Panc1 (cell line): ENCODE measurements at regions of chr5 and their contacts with region 1.

Region 1: GRCh38 chr5:92017786-92018185 is 634.7 kb upstream of the ARRDC3 start:
- DNase-seq: peak; percentile 33
- ATAC-seq: peak; percentile 98
- H3K4me3 ChIP-seq: no peak overlapping the region
- H3K27ac ChIP-seq: peak overlapping the region; percentile 75; the same call in 1 of the 2 replicates
- H3K4me1 ChIP-seq: peaks cover 13% of the 10 kb centered on the region; the same call in 1 of the 2 replicates
- H3K27me3 ChIP-seq: no peaks in the 10 kb centered on the region
- CTCF ChIP-seq: no peak

Region 2: GRCh38 chr5:92378966-92379611 is 361.3 kb after region 1 on chr5:
- CTCF ChIA-PET with region 1: no interaction called
- POLR2A ChIA-PET with region 1: no interaction called
- in situ Hi-C with region 1: no loop called
- intact Hi-C with region 1: loop called (anchors 5 kb)
- DNase-seq: no peak
- ATAC-seq: peak; percentile 93
- H3K4me3 ChIP-seq: peak overlapping the region in 1 of 2 experiments; percentile 34; a peak in 2 of 4 replicates
- H3K27ac ChIP-seq: peak overlapping the region; percentile 71
- H3K4me1 ChIP-seq: peaks cover 27% of the 10 kb centered on the region
- H3K27me3 ChIP-seq: no peaks in the 10 kb centered on the region
- CTCF ChIP-seq: no peak